ENCODE measurements at regions of chr6 and their contacts with region 1.

Region 1: DNA sequence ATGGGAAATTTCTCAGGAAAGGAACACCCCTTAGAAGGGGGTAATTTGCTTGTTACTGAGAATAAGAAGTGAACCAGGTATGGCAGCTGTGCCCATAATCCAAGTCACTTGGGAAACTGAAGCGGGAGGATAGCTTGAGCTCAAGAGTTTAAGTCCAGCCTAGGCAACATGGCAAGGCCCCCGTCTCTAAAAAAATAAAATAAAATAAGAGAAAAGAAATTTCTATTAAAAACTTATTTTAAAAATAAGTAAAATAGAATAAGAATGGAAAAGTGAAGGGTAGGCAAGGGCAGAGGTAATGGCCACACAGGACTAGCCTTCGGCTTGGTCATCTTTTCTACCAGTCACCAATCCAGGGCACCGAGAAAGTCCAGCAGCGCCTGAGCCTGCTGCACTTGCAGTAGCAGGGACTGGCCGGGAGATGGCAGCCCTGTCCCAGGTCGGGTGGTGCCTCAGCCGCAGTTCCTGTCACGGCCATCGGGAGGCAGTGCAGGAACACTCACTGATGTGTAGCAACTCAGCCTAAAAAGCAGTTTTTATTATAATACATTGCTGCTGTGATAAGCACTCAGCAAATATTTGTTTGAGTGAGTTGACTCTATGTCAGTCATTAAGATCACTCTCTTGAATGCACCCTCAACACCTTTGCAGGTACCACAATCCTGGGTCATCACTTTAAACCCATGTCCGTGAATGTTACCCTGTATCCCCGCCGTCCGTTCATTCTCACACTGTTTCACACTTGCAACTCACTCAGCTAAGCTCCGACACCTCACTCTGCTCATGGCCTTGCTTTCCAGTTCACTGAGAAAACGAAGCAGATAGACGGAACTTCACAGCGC is 23.2 kb upstream of the GCM1 start:
- DNase-seq: peak; percentile 57 to 98
- H3K4me3 ChIP-seq: no peak overlapping the region
- H3K27ac ChIP-seq: no peak overlapping the region
- H3K4me1 ChIP-seq: no peaks in the 10 kb centered on the region
- H3K27me3 ChIP-seq: no peaks in the 10 kb centered on the region
- CTCF ChIP-seq: peak; percentile 100
- EP300 ChIP-seq: no peak; a peak in 1 of 3 replicates
- POLR2A ChIP-seq: no peak
- RAD21 ChIP-seq: peak; percentile 100

Region 2: DNA sequence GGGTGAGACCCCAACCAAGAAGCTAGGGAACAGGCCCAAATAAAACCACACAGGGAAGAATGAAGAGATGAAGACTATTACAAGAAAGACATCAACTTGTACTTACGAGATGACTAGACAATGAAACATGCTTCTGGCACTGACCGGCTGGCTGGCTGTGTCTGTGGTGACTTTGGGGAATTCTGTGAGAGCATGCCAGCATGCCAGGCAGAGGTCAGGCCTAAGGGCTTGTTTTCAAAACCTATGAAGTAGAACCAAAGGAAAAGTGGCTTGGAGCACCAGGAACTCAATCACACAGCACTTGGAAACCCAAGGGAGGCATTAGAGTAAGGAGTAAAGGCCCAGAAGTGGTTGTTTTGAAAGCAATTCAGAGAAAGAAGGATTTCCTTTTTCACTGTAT is 233.9 kb before region 1 on chr6:
- CTCF ChIA-PET with region 1: no interaction called
- POLR2A ChIA-PET with region 1: no interaction called
- DNase-seq: no peak
- H3K4me3 ChIP-seq: no peak overlapping the region
- H3K27ac ChIP-seq: no peak overlapping the region
- H3K4me1 ChIP-seq: no peaks in the 10 kb centered on the region
- H3K27me3 ChIP-seq: no peaks in the 10 kb centered on the region
- CTCF ChIP-seq: no peak
- EP300 ChIP-seq: no peak
- POLR2A ChIP-seq: no peak
- RAD21 ChIP-seq: no peak

Region 3: GRCh38 chr6:53074347-53074746 is 97.5 kb before region 1 on chr6:
- CTCF ChIA-PET with region 1: no interaction called
- POLR2A ChIA-PET with region 1: no interaction called
- DNase-seq: no peak
- H3K4me3 ChIP-seq: no peak overlapping the region
- H3K27ac ChIP-seq: no peak overlapping the region
- H3K4me1 ChIP-seq: no peaks in the 10 kb centered on the region
- H3K27me3 ChIP-seq: no peaks in the 10 kb centered on the region
- CTCF ChIP-seq: no peak
- EP300 ChIP-seq: no peak
- POLR2A ChIP-seq: no peak
- RAD21 ChIP-seq: no peak

Region 4: GRCh38 chr6:53151676-53152075 is 20.1 kb before region 1 on chr6:
- CTCF ChIA-PET with region 1: interaction called, 18 read pairs
- POLR2A ChIA-PET with region 1: no interaction called
- DNase-seq: peak; percentile 15 to 65
- H3K4me3 ChIP-seq: no peak overlapping the region
- H3K27ac ChIP-seq: no peak overlapping the region
- H3K4me1 ChIP-seq: no peaks in the 10 kb centered on the region
- H3K27me3 ChIP-seq: no peaks in the 10 kb centered on the region
- CTCF ChIP-seq: peak; percentile 73 to 88 (median 77)
- EP300 ChIP-seq: no peak
- POLR2A ChIP-seq: no peak
- RAD21 ChIP-seq: peak; percentile 62 to 73

Region 5: GRCh38 chr6:53250176-53251032 is 78.6 kb after region 1 on chr6:
- CTCF ChIA-PET with region 1: interaction called, 12 read pairs
- POLR2A ChIA-PET with region 1: no interaction called
- DNase-seq: no peak
- H3K4me3 ChIP-seq: no peak overlapping the region
- H3K27ac ChIP-seq: no peak overlapping the region
- H3K4me1 ChIP-seq: no peaks in the 10 kb centered on the region
- H3K27me3 ChIP-seq: no peaks in the 10 kb centered on the region
- CTCF ChIP-seq: no peak
- EP300 ChIP-seq: no peak
- POLR2A ChIP-seq: no peak
- RAD21 ChIP-seq: no peak

Region 6: DNA sequence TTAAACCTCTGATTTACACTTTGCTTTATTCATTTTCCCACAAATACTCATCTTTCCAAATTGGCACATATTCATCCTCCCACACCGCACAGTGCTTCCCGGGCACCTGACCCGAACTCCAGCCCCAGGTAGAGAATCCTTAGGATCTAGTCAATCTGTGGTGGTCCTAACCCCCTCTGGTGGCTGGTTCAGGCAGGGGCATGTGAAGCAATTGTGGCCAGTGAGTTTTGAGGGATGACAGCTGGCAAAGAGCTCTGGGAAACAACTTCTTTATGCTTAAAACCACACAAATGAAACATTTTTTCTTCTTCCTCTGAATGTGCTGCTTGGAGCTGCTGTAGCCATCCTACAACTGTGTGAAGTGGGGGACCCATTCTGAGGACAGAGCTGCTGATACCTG is 122.3 kb after region 1 on chr6:
- CTCF ChIA-PET with region 1: interaction called, 46 read pairs
- POLR2A ChIA-PET with region 1: no interaction called
- DNase-seq: peak in 1 of 2 experiments; percentile 64
- H3K4me3 ChIP-seq: no peak overlapping the region
- H3K27ac ChIP-seq: no peak overlapping the region
- H3K4me1 ChIP-seq: no peaks in the 10 kb centered on the region
- H3K27me3 ChIP-seq: no peaks in the 10 kb centered on the region
- CTCF ChIP-seq: peak; percentile 71 to 85 (median 82)
- EP300 ChIP-seq: no peak
- POLR2A ChIP-seq: no peak
- RAD21 ChIP-seq: peak; percentile 69 to 76

Region 7: DNA sequence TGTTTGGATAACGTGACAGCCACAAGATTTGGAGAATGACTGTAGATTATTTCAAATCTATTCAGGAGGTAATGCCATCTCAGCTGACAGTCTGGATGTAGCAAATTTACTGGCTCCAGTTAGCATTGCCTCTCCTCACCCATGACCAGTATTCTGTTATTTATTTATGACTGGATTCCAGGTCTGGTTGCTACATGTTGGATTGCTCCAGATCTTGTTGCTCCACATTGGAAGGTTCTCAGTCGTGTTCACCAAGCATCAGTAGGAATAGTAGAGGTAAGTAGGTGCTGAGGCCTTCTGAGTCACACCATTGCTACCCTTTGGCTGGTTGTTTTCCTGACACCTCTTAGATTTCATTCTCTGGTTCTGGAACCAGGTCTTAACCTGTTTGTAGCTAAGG is 246.5 kb after region 1 on chr6:
- CTCF ChIA-PET with region 1: interaction called, 11 read pairs
- POLR2A ChIA-PET with region 1: no interaction called
- DNase-seq: no peak
- H3K4me3 ChIP-seq: no peak overlapping the region
- H3K27ac ChIP-seq: no peak overlapping the region
- H3K4me1 ChIP-seq: no peaks in the 10 kb centered on the region
- H3K27me3 ChIP-seq: no peaks in the 10 kb centered on the region
- CTCF ChIP-seq: no peak
- EP300 ChIP-seq: no peak
- POLR2A ChIP-seq: no peak
- RAD21 ChIP-seq: no peak

Region 8: DNA sequence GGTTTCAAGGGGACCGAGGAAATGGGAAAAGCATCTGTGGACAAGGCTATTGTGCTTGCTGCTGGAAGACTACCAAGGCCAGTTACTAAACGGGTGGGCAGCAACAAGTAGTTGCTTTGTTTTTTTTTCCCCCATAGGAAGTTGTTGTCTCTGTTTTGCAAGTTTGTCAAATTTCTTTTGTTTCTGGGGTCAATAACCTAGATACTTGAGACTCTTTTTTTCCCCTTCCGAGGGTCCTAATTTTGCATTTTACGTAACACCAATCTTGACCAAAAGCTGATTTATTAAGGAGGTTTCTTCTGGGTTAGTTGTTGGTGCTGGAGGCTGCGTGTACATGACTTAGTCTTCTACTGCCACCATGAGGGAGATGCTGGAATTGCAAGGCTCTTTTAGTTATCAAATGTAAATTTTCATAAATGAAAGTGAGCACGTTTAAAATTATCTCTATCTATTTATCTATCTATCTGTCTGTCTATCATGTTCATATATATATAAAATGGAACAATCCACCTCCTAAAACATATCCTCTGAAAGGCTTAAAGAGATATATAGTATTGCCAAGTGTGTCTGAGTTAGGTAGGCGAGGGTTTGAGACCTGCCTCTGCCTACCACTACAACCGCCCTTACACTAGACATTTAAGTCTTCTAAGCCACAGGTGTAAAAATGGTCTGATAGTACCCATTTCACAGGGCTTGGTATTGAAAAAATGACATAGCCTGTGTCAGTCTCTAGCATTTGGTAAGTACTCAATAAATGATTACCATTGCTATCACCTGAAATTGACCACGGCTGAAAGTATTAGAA is 312.9 kb after region 1 on chr6:
- CTCF ChIA-PET with region 1: interaction called, 54 read pairs
- POLR2A ChIA-PET with region 1: no interaction called
- DNase-seq: peak in 1 of 2 experiments; percentile 73
- H3K4me3 ChIP-seq: no peak overlapping the region
- H3K27ac ChIP-seq: no peak overlapping the region
- H3K4me1 ChIP-seq: no peaks in the 10 kb centered on the region
- H3K27me3 ChIP-seq: peaks cover 0 to 1% (median 0%) of the 10 kb centered on the region in 4 experiments; a peak in 1 of 7 replicates
- CTCF ChIP-seq: peak; percentile 7 to 85 (median 75)
- EP300 ChIP-seq: no peak
- POLR2A ChIP-seq: no peak
- RAD21 ChIP-seq: peak; percentile 93

Measured in H1 (cell line).